Activated B cell treated with CpG ODN at 0.5 μM for 24 hours (primary cell): ENCODE measurements at regions of chr7 and their contacts with region 1.

Region 1: GRCh38 chr7:74569501-74570075 is 87.9 kb upstream of the GTF2I start:
- DNase-seq: no peak
- ATAC-seq: no peak
- H3K4me3 Mint-ChIP-seq: no peak overlapping the region
- H3K27ac Mint-ChIP-seq: no peak overlapping the region
- H3K4me1 Mint-ChIP-seq: peaks cover 3% of the 10 kb centered on the region
- H3K27me3 Mint-ChIP-seq: peaks cover 5% of the 10 kb centered on the region
- CTCF ChIP-seq: no peak

Region 2: DNA sequence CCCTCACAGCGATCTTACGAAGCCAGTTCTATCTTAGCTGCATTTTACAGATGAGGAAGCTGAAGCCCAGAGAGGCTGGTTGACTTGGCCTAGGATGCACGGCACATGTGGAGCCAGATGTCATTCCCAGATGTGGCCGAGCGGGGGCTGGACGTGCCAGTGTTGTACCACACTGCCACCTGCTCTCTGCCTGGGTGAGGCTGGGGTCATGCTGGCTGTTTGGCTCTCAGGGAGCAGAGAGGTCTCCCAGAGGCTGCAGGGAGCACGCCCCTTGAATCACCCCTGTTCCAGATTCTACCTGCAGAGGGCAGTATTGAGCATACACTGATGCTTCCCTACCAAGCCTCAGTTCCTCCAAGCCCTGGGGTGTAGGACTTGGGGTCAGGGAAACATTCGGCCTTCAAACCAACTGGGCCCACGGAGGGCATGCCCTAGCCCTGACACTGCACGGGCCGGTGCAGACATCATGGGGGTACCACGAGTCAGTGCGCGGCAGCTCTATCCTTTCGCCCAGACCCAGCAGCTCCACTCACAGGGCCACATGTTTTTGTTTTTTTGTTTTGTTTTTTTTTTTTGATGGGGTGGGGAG is 119.7 kb before region 1 on chr7:
- CTCF ChIA-PET with region 1: interaction called, 14 read pairs
- POLR2A ChIA-PET with region 1: interaction called, 11 read pairs
- intact Hi-C with region 1: loop called (anchors 1 kb)
- DNase-seq: peak; percentile 29
- ATAC-seq: peak; percentile 51
- H3K4me3 Mint-ChIP-seq: no peak overlapping the region
- H3K27ac Mint-ChIP-seq: no peak overlapping the region
- H3K4me1 Mint-ChIP-seq: peaks cover 12% of the 10 kb centered on the region
- H3K27me3 Mint-ChIP-seq: peaks cover 3% of the 10 kb centered on the region
- CTCF ChIP-seq: no peak

Region 3: DNA sequence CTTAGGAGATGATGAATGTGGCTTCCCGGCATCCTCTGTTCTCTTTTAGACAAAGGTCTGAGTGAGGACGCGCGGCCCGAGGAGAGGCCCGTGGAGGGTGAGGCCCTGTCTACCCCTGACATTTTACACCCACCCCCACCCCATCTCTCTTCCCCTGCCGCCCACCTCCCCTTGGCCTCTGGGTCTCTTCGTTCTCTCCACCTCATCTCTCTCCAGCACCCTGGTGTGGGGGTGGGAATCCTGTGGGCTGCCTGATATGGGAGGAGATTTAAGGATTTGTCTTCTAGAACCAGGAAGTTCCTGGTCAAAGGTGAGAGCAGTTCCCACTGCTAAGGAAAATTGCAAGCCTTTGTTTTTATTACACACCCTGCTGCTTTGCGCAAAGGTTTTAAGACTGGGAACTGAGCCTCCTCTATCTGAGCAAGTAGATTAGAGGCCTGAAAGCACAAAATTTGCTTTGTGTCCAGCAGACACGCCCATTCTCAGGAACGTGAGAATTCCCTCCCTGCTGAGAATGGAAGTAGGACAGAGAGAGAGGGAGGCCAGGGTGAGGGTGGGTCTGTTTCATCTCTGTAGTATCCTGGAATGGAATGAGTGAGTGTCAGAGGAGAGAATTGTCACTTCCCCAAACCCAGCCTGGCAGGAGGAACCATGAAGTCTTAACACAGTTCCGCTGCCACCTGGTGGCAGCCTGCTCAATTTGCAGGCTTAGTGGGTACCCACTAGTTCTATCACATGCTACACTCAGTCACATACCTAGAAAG is 24.7 kb before region 1 on chr7:
- CTCF ChIA-PET with region 1: no interaction called
- POLR2A ChIA-PET with region 1: no interaction called
- intact Hi-C with region 1: no loop called
- DNase-seq: no peak
- ATAC-seq: no peak
- H3K4me3 Mint-ChIP-seq: no peak overlapping the region
- H3K27ac Mint-ChIP-seq: no peak overlapping the region
- H3K4me1 Mint-ChIP-seq: no peaks in the 10 kb centered on the region
- H3K27me3 Mint-ChIP-seq: no peaks in the 10 kb centered on the region
- CTCF ChIP-seq: no peak